Sciatic nerve (tissue), 2 donors: ENCODE measurements at regions of chr17 and their contacts with region 1.

Region 1: DNA sequence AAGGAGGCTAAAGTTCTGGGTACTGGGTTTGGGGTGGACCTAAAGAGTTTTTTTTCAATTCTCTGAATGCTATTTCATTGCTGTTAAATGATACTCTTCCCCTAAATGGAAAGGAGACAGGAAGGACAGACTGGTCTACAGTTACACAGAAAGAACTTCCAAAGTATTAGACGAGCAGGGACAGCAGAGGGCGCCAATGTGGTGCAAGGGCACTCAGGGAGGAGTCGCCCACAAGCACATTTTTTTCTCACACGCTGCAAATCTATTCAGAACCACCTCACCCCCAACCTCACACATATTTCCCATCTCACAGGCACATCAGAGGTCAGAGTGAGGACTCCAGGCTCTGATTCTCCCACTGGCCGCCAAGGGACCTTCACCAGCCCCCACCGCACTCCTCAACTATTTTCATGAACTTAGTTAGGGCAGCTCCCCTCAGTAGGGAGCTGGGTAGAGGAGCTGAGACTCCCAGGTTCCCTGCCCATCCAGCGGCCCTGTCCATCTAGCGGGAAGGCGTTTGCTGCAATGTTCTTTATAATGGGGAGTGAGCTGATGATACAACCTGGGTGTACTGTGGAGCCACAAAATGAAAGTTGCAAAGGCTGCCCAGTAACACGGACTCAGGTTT is 6.8 kb upstream of the CA4 start:
- DNase-seq: peak; percentile 93
- ATAC-seq: peak; percentile 86

Region 2: DNA sequence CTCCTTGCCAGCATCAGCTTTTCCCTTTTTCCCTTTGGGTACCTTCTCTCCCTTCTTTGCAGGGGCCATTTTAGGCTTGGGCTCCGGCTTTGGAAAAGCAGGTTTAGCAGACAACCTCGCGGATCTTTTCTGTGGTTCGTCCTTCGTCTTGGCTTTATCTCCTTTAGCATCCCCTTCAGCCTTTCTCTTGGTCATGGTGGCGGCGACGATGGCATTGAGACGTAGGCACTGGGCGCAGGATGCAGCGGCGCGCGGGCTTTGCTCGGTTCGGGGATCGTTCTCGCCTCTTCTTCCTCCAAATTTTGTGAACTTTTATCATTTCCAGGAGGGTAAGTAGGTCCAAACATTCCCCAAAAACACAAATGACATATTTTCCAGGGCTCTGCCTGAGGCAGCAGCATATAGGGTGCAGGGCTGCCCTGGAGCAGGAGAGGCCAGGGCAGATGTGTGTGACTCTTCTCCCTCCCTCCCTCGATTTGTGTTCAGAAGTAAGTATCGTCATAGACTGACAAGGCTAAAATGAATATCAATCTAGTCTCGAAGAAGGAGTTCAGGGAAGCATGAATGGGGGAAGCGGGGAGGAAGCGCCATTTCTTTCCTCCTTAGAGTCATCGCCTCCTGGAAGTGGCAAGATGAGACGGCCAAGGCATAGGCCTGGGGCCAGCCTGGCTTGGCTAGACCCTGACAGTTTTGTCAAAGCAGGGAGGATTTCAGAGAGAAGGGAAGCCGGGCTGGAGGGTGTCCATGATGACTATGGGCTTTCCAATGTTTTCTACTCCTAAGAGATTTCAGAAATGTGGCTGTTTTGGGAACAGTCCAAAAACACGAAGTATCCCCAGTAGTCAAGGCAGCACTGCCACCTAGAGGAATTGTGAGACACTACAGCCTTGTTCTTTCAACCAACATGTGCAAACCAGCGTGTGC is 292.5 kb after region 1 on chr17:
- intact Hi-C with region 1: loop called (anchors 10 kb)
- DNase-seq: peak; percentile 82
- ATAC-seq: peak; percentile 93